GM10248 (cell line): ENCODE measurements at regions of chr19 and their contacts with region 1.

Region 1: DNA sequence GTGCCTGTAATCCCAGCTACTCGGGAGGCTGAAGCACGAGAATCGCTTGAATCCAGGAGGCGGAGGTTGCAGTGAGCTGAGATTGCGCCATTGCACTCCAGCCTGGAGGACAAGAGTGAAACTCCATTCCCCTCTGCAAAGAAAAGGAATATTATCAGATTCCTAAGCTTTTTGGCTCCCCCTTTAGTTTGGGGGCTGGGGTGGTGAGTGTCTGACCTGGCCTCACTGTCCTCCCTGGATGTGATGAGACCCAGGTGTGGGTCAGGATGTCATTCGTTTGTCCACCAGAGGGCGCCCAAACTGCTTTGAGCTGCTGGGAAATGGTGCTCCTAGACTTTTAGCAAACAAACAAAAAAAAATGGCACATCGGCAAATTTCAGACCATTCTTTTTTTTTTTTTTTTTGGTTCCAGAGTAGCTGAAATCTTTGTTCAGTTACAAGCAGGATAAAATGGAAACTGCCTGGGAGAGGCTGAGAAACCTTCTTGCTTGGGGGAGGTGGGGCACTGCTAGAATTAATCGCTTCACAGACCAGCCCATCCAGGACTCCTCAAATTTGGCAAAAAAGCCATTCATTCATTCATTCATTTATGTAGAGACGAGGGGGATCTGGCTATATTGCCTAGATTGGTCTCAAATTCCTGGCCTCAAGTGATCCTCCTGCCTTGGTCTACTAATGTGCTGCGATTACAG is 29.4 kb downstream of the SPC24 start:
- DNase-seq: peak; percentile 77
- CTCF ChIP-seq: peak; percentile 82

Region 2: DNA sequence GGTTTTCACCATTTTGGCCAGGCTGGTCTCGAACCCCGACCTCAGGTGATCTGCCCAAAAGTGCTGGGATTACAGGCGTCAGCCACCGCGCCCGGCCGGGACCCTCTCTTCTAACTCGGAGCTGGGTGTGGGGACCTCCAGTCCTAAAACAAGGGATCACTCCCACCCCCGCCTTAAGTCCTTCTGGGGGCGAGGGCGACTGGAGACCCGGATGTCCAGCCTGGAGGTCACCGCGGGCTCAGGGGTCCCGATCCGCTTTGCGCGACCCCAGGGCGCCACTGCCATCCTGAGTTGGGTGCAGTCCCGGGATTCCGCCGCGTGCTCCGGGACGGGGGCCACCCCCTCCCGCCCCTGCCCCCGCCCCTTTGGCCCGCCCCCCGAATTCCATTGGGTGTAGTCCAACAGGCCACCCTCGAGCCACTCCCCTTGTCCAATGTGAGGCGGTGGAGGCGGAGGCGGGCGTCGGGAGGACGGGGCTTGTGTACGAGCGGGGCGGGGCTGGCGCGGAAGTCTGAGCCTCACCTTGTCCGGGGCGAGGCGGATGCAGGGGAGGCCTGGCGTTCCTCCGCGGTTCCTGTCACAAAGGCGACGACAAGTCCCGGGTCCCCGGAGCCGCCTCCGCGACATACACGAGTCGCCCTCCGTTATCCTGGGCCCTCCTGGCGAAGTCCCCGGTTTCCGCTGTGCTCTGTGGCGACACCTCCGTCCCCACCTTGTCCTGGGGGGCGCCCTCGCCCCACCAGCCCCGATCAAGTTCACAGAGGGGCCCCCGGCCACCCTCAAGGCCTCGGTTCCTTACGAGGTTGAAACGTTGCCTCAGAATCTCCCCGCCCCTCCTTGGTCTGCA is 35.9 kb before region 1 on chr19:
- CTCF ChIA-PET with region 1: interaction called, 15 read pairs
- POLR2A ChIA-PET with region 1: no interaction called
- DNase-seq: peak; percentile 94
- CTCF ChIP-seq: peak; percentile 22

Region 3: DNA sequence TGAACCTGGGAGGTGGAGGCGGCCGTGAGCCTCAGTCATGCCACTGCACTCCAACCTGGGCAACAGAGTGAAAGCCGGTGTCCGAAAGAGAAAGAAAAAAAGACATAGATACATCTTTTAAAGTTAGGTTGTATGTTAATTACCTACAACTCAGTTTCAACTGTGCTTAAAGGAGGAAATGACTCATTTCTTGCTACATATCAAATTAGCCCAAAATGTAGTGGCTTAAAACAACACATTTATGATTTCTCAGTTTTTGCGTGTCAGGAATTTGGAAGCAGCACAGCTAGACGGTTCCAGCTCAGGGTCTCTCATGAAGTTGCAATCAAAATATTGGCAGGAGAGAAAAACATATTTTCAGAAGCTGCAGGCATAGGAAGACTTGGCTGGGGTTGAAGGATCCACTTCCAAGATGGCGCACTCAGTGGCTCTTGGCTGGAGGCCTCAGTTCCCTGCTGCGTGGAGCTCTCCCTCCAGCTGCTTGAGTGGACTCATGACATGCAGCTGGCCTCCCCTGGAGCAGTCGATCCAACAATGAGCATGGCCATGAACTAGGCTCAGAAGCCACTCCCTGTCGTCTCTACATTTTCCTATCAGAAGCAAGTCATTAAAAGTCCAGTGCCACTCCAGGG is 29.8 kb before region 1 on chr19:
- CTCF ChIA-PET with region 1: interaction called, 15 read pairs
- POLR2A ChIA-PET with region 1: no interaction called
- DNase-seq: peak; percentile 52
- CTCF ChIP-seq: no peak

Region 4: DNA sequence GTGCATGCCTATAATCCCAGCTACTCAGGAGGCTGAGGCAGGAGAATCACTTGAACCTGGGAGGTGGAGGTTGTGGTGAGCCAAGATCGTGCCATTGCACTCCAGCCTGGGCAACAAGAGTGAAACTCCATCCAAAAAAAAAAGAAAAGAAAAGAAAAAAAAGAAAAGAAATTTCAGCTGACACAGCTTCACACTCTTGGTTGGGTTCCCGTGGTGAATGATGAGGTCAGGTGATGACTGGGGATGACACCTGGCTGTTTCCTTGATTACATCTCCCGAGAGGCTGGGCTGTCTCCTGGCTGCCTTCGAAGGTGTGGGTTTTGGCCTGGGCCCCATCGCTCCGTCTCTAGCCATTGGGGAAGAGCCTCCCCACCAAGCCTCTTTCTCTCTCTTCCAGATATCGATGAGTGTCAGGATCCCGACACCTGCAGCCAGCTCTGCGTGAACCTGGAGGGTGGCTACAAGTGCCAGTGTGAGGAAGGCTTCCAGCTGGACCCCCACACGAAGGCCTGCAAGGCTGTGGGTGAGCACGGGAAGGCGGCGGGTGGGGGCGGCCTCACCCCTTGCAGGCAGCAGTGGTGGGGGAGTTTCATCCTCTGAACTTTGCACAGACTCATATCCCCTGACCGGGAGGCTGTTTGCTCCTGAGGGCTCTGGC is 14.9 kb before region 1 on chr19:
- CTCF ChIA-PET with region 1: interaction called, 25 read pairs
- POLR2A ChIA-PET with region 1: no interaction called
- DNase-seq: no peak
- CTCF ChIP-seq: no peak

Region 5: DNA sequence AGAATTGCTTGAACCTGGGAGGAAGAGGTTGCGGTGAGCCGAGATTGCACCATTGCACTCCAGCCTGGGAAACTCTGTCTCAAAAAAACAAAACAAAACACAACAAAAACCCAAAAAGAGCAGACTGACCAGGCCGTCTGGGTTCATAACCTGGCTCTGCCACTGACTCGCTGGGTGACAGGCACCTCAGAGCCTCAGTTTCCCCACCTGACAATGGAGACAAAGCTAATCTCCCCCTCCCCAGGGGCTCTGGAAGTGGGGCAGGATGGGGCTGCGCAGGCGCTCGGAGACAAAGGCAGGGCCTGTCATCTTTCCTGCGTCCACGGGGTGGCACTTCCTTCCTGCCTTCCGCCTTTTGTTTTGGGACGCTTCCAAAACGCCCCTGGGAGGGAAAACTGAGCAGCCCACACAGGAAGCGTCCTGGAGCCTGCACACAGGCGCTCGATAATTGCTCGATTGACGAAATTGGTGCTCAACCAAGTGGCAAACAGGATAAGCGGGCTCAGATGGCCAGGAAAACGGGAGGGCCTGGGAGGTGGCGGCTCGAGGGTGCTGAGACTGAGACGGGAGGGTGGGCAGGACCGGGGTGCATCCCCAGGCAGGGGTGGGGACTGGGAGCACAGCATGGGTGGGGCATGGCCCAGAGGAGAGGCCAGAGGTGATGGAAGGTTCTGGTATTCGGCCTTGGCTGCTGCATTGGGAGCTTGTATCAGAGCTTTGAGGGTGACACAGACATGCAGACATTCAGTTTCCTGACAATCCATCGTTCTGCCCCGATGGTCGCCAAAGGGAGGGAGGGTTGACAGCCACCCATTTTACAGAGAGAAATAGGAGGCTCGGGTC is 11.6 kb after region 1 on chr19:
- CTCF ChIA-PET with region 1: interaction called, 42 read pairs
- POLR2A ChIA-PET with region 1: no interaction called
- DNase-seq: peak; percentile 73
- CTCF ChIP-seq: peak; percentile 64